PC-9 (cell line): ENCODE measurements at regions of chr2 and their contacts with region 1.

Region 1: GRCh38 chr2:193963472-193964119 is 1693.4 kb upstream of the SLC39A10 start:
- DNase-seq: no peak
- H3K4me3 ChIP-seq: no peak overlapping the region
- H3K27ac ChIP-seq: no peak overlapping the region
- H3K4me1 ChIP-seq: peaks cover 8% of the 10 kb centered on the region
- H3K27me3 ChIP-seq: no peaks in the 10 kb centered on the region
- CTCF ChIP-seq: peak; percentile 64

Region 2: GRCh38 chr2:193502363-193503035 is 461.1 kb before region 1 on chr2:
- CTCF ChIA-PET with region 1: no interaction called
- POLR2A ChIA-PET with region 1: no interaction called
- intact Hi-C with region 1: no loop called
- DNase-seq: no peak
- H3K4me3 ChIP-seq: no peak overlapping the region
- H3K27ac ChIP-seq: no peak overlapping the region
- H3K4me1 ChIP-seq: no peaks in the 10 kb centered on the region
- H3K27me3 ChIP-seq: no peaks in the 10 kb centered on the region
- CTCF ChIP-seq: no peak

Region 3: GRCh38 chr2:193695367-193695766 is 268.2 kb before region 1 on chr2:
- CTCF ChIA-PET with region 1: interaction called, 3 read pairs
- POLR2A ChIA-PET with region 1: no interaction called
- intact Hi-C with region 1: loop called (anchors 5 kb)
- DNase-seq: no peak
- H3K4me3 ChIP-seq: no peak overlapping the region
- H3K27ac ChIP-seq: no peak overlapping the region
- H3K4me1 ChIP-seq: no peaks in the 10 kb centered on the region
- H3K27me3 ChIP-seq: no peaks in the 10 kb centered on the region
- CTCF ChIP-seq: peak; percentile 46; the same call in 1 of the 2 replicates

Region 4: DNA sequence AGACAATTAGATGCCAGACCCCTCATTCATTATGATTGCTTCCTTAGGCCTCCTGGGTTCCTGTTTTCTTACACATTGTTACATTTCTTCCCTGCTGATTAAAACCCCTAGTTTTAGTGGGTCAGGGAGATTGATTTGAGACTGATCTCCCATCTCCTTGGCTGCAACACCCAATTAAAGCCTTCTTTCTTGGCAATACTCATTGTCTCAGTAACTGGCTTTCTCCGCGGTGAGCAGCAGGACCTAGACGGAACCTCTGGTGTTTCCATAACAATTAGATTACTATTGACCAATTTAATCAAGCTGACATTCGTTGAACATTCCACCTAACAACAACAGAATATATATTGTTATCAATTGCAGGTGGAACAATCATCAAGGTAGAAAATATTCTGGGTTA is 17.0 kb after region 1 on chr2:
- CTCF ChIA-PET with region 1: no interaction called
- POLR2A ChIA-PET with region 1: no interaction called
- intact Hi-C with region 1: no loop called
- DNase-seq: no peak
- H3K4me3 ChIP-seq: no peak overlapping the region
- H3K27ac ChIP-seq: no peak overlapping the region
- H3K4me1 ChIP-seq: no peaks in the 10 kb centered on the region
- H3K27me3 ChIP-seq: no peaks in the 10 kb centered on the region
- CTCF ChIP-seq: no peak